Activated CD4-positive, alpha-beta memory T cell treated with anti-CD3 and anti-CD28 coated beads for 36 hours (primary cell): ENCODE measurements at regions of chr7 and their contacts with region 1.

Region 1: GRCh38 chr7:34991938-34992840 is 45.1 kb downstream of the DPY19L1 start:
- DNase-seq: peak; percentile 81
- H3K4me3 Mint-ChIP-seq: peak overlapping the region; percentile 23
- H3K27ac Mint-ChIP-seq: peak overlapping the region; percentile 83
- H3K4me1 Mint-ChIP-seq: peaks cover 29% of the 10 kb centered on the region
- H3K27me3 Mint-ChIP-seq: no peaks in the 10 kb centered on the region

Region 2: GRCh38 chr7:34675749-34676374 is 316.3 kb before region 1 on chr7:
- CTCF ChIA-PET with region 1: no interaction called
- POLR2A ChIA-PET with region 1: no interaction called
- intact Hi-C with region 1: loop called (anchors 5 kb)
- DNase-seq: peak; percentile 37
- H3K4me3 Mint-ChIP-seq: no peak overlapping the region
- H3K27ac Mint-ChIP-seq: no peak overlapping the region
- H3K4me1 Mint-ChIP-seq: no peaks in the 10 kb centered on the region
- H3K27me3 Mint-ChIP-seq: no peaks in the 10 kb centered on the region

Region 3: GRCh38 chr7:34718867-34719266 is 273.3 kb before region 1 on chr7:
- CTCF ChIA-PET with region 1: no interaction called
- POLR2A ChIA-PET with region 1: no interaction called
- intact Hi-C with region 1: loop called (anchors 2 kb)
- DNase-seq: no peak
- H3K4me3 Mint-ChIP-seq: no peak overlapping the region
- H3K27ac Mint-ChIP-seq: no peak overlapping the region
- H3K4me1 Mint-ChIP-seq: peaks cover 25% of the 10 kb centered on the region
- H3K27me3 Mint-ChIP-seq: no peaks in the 10 kb centered on the region

Region 4: GRCh38 chr7:34973400-34973760 is 18.8 kb before region 1 on chr7:
- CTCF ChIA-PET with region 1: no interaction called
- POLR2A ChIA-PET with region 1: no interaction called
- intact Hi-C with region 1: loop called (anchors 2 kb)
- DNase-seq: no peak
- H3K4me3 Mint-ChIP-seq: no peak overlapping the region
- H3K27ac Mint-ChIP-seq: no peak overlapping the region
- H3K4me1 Mint-ChIP-seq: peaks cover 10% of the 10 kb centered on the region
- H3K27me3 Mint-ChIP-seq: no peaks in the 10 kb centered on the region